CD8-positive, alpha-beta T cell (primary cell): ENCODE measurements at regions of chr6 and their contacts with region 1.

Region 1: DNA sequence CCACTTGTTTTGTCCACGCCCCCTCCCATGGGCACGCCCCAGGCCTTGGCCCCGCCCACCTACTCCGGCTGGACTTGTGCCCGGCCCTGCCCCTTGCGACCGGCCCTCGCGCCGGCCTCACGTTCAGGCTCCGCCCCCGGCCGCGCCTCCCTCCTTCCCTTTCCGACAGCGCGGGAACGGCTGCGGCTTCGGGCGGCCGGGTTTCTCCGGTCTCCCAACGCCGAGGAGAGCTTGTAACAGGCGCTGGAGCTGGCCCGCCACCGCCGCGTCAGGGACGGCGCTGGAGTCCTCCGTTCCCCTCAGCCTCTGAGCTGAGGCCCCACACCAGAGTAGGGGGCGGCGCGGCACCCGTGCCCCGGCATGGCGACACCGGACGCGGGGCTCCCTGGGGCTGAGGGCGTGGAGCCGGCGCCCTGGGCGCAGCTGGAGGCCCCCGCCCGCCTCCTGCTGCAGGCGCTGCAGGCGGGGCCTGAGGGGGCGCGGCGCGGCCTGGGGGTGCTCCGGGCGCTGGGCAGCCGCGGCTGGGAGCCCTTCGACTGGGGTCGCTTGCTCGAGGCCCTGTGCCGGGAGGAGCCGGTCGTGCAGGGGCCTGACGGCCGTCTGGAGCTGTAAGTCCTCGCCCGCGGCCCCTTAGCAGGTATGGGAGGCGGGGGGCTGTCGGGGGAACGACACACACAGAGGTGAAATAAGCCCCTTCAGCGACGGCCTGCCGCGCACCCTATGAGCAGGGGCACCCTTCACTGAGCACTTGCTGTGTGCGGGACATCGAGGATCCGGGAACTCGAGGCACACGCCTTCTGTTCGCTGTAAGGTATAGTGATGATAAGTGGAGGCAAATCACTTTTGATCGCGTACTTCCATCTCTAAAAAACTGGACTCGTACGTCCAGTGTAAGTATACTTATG is at the start of gene FANCE:
- DNase-seq: peak; percentile 62 to 91 (median 90)
- ATAC-seq: peak; percentile 81
- H3K4me3 ChIP-seq: peak within 1 kb of the TSS; percentile 64 to 86
- H3K4me3 Mint-ChIP-seq: peak within 1 kb of the TSS; percentile 85
- H3K27ac ChIP-seq: peak within 1 kb of the TSS; percentile 28 to 47
- H3K27ac Mint-ChIP-seq: peak within 1 kb of the TSS; percentile 77
- H3K4me1 ChIP-seq: peaks cover 25% of the 10 kb centered on the region
- H3K4me1 Mint-ChIP-seq: peaks cover 22% of the 10 kb centered on the region
- H3K27me3 ChIP-seq: no peaks in the 10 kb centered on the region
- H3K27me3 Mint-ChIP-seq: no peaks in the 10 kb centered on the region
- CTCF ChIP-seq: no peak
- total RNA-seq, gene FANCE: 1.1 to 1.2 TPM

Region 2: DNA sequence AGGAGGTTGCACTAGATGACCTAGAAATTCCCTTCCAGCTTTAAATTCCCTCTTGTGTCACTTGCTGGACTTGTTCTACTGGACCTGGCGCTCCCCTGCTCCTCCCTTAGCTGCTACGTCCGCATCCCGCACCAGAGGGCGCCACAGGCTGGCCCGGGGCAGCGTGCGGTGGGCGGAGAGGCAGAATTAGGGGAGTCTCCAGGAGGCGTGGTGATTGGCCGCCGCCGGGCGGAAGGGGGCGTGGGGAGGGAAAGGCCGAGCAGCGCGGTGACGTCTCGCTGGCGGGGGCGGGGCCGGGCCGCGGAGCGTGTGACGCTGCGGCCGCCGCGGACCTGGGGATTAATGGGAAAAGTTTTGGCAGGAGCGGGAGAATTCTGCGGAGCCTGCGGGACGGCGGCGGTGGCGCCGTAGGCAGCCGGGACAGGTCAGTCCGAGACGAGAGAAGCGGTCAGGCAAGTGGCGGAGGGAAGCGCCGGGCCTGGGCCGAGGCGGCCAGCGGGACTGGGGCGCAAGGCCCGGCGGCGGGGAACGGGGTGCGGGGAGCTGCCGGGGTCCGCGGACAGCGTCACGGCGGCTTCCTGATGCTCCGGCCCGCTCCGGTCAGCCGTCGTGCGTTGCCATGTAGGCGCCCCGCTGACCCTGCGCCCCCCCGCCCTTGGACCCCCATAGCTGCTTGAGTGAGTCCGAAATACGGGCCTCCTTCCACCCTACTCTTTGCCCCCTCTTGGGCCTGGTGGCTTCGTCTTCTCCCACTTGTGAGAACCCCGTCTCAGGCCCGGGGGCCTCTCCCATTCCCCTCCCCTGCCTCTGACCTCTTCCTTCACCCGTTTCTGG is 110.0 kb before region 1 on chr6 and contains the start of gene PPARD:
- CTCF ChIA-PET with region 1: interaction called, 173 read pairs
- POLR2A ChIA-PET with region 1: interaction called, 7 read pairs
- intact Hi-C with region 1: loop called (anchors 1 kb)
- DNase-seq: peak; percentile 93 to 99 (median 97)
- ATAC-seq: peak; percentile 99
- H3K4me3 ChIP-seq: peak within 1 kb of the TSS; percentile 52 to 57
- H3K4me3 Mint-ChIP-seq: peak within 1 kb of the TSS; percentile 87
- H3K27ac ChIP-seq: peak within 1 kb of the TSS; percentile 75 to 81
- H3K27ac Mint-ChIP-seq: peak within 1 kb of the TSS; percentile 94
- H3K4me1 ChIP-seq: peaks cover 43% of the 10 kb centered on the region
- H3K4me1 Mint-ChIP-seq: peaks cover 50% of the 10 kb centered on the region
- H3K27me3 ChIP-seq: no peaks in the 10 kb centered on the region
- H3K27me3 Mint-ChIP-seq: no peaks in the 10 kb centered on the region
- CTCF ChIP-seq: peak; percentile 90
- total RNA-seq, gene PPARD: 20.0 to 21.5 TPM

Region 3: DNA sequence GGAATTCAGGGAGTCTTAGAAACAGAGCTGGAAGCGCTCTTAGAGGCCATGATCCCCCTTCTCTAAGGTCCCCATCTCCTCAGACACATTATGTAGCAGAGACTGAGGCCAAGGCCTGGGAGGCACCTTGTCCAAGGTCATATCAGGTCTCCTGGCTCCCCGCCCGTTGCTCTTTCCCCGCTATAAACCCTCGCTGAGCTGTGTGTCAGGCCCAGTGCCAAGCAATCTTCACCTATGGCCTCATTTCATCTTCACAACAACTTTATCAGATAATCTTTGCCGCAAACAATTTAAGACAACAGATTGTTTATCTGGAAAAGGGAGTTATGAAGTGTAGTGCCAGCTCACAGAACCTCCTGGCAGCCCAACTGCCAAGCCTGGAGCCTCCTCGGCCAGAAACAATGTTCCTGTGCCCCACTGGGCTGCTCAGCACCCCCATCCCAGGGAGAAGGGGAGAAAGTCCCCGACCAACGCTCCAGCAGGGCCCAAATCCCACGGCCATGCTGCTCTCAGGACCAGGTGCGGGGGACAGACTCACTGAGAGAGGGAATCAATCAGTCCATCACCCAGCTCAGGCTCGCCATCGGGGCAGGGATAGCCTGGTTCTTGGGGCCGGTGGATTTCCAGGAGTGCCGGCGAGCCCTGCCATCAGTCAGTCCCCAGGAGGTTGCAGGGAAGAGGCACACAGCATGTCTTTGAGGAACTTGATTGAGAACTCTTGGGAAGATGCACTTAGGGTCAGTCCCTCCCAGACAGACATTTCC is 17.2 kb before region 1 on chr6:
- CTCF ChIA-PET with region 1: interaction called, 12 read pairs
- POLR2A ChIA-PET with region 1: no interaction called
- intact Hi-C with region 1: no loop called
- DNase-seq: no peak
- ATAC-seq: no peak
- H3K4me3 ChIP-seq: no peak overlapping the region
- H3K4me3 Mint-ChIP-seq: no peak overlapping the region
- H3K27ac ChIP-seq: no peak overlapping the region
- H3K27ac Mint-ChIP-seq: no peak overlapping the region
- H3K4me1 ChIP-seq: no peaks in the 10 kb centered on the region
- H3K4me1 Mint-ChIP-seq: no peaks in the 10 kb centered on the region
- H3K27me3 ChIP-seq: no peaks in the 10 kb centered on the region
- H3K27me3 Mint-ChIP-seq: no peaks in the 10 kb centered on the region
- CTCF ChIP-seq: no peak

Region 4: GRCh38 chr6:35496841-35497570 is 44.6 kb after region 1 on chr6 and contains the start of gene TEAD3:
- CTCF ChIA-PET with region 1: no interaction called
- POLR2A ChIA-PET with region 1: no interaction called
- intact Hi-C with region 1: loop called in 1 of 2 experiments (anchors 5 kb)
- DNase-seq: peak in 8 of 9 experiments; percentile 10 to 73 (median 39)
- ATAC-seq: peak; percentile 72
- H3K4me3 ChIP-seq: peak within 1 kb of the TSS; percentile 55 to 65
- H3K4me3 Mint-ChIP-seq: peak within 1 kb of the TSS; percentile 80
- H3K27ac ChIP-seq: no peak within 1 kb of the TSS
- H3K27ac Mint-ChIP-seq: no peak within 1 kb of the TSS
- H3K4me1 ChIP-seq: peaks cover 11% of the 10 kb centered on the region
- H3K4me1 Mint-ChIP-seq: peaks cover 17% of the 10 kb centered on the region
- H3K27me3 ChIP-seq: peaks cover 0 to 8% of the 10 kb centered on the region in 2 experiments
- H3K27me3 Mint-ChIP-seq: peaks cover 21% of the 10 kb centered on the region
- CTCF ChIP-seq: no peak
- total RNA-seq, gene TEAD3: not detected

Region 5: DNA sequence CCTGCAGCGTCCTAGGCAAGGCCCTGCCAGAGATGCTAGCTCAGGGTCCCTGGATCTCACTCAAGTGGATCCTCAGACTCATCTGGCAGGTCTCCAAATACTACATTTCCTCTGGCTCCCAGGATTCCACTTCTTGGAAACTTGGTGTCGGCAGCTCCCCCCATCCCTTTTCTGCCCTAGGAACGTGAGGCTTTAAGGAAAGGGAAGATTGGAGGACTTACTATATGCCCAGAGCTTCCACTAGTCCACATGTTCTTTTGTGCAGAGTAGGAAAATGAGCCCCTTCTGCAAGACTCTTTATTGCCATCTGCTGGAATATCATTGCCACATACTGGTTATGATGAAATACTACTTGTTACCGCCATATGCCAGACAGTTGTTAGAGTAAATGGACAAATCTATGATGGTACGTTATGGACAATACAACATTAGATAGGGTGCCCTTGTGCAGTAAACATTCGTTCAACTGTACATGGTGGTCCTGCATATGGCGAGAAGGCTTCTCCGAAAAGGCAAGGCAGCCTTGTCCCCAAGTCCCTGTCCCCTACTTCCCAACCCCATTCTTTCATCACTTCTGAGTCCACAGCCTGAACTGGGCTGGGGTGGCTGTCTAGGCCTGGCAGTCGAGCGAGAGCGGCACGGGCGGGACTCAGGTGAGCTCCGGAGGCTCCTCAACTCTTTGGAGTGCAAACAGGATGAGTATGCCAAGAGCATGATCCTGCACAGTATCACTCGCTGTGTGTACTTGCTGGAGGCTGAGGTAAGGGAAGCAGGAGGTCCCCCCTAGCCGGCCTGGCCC is 285.2 kb after region 1 on chr6:
- CTCF ChIA-PET with region 1: interaction called, 6 read pairs
- POLR2A ChIA-PET with region 1: interaction called, 3 read pairs
- intact Hi-C with region 1: loop called in 1 of 2 experiments (anchors 1 kb)
- DNase-seq: peak in 4 of 9 experiments; percentile 22 to 83 (median 68)
- ATAC-seq: peak; percentile 72
- H3K4me3 ChIP-seq: no peak overlapping the region
- H3K4me3 Mint-ChIP-seq: no peak overlapping the region
- H3K27ac ChIP-seq: no peak overlapping the region
- H3K27ac Mint-ChIP-seq: peak overlapping the region; percentile 66
- H3K4me1 ChIP-seq: peaks cover 48% of the 10 kb centered on the region
- H3K4me1 Mint-ChIP-seq: peaks cover 42% of the 10 kb centered on the region
- H3K27me3 ChIP-seq: no peaks in the 10 kb centered on the region
- H3K27me3 Mint-ChIP-seq: peaks cover 1% of the 10 kb centered on the region
- CTCF ChIP-seq: peak; percentile 77